Dorsolateral prefrontal cortex (tissue), 120 donors: ENCODE measurements at regions of chr5 and their contacts with region 1.

Region 1: GRCh38 chr5:141557681-141558136 is 61.1 kb downstream of the DIAPH1 start:
- DNase-seq: peak; percentile 82 to 96 (median 88)
- H3K4me3 ChIP-seq: peak overlapping the region; percentile 8 to 74 (median 53)
- H3K27ac ChIP-seq: peak overlapping the region; percentile 38 to 98 (median 93)
- H3K27me3 ChIP-seq: no peaks in the 10 kb centered on the region
- CTCF ChIP-seq: peak; percentile 88 to 100 (median 96)

Region 2: GRCh38 chr5:141349917-141350619 is 207.6 kb before region 1 on chr5 and contains the start of gene PCDHGB1:
- intact Hi-C with region 1: loop called in 1 of 2 experiments (anchors 10 kb)
- DNase-seq: no peak
- H3K4me3 ChIP-seq: peak within 1 kb of the TSS in 46 of 59 donors; percentile 0 to 55 (median 28)
- H3K27ac ChIP-seq: no peak within 1 kb of the TSS
- H3K27me3 ChIP-seq: peaks cover 0 to 46% (median 4%) of the 10 kb centered on the region in 45 donors
- CTCF ChIP-seq: peak in 47 of 56 donors; percentile 11 to 61 (median 34)
- total RNA-seq, gene PCDHGB1: 5.3 to 22.6 (median 11.4) TPM

Region 3: DNA sequence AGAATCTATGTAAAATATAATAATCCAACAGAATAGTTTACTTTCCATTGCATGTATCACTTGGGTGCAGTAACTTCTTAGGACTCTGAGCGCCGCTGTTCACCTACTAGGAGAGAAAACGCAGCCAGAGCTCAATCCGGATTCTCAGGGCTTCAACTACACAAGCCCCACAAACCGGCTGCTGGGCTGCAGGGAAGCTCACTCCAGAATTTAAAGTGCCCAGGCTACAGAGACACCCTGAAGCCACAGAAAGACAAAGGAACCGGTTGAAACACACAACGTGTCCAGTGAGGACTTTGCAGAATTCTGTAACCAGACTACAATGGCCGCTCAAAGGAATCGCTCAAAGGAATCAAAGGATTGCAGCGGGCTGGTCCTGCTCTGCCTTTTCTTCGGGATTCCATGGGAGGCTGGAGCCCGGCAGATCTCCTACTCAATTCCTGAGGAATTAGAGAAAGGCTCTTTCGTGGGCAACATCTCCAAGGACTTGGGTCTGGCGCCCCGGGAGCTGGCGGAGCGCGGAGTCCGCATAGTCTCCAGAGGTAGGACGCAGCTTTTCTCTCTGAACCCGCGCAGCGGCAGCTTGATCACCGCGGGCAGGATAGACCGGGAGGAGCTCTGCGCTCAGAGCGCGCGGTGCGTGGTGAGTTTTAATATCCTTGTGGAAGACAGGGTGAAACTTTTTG is 144.7 kb before region 1 on chr5 and contains the start of gene PCDHGA10:
- intact Hi-C with region 1: loop called in 1 of 2 experiments (anchors 5 kb)
- DNase-seq: peak in 1 of 10 donors; percentile 37
- H3K4me3 ChIP-seq: peak within 1 kb of the TSS in 47 of 59 donors; percentile 1 to 55 (median 32)
- H3K27ac ChIP-seq: peak within 1 kb of the TSS in 2 of 59 donors; percentile 22 to 34
- H3K27me3 ChIP-seq: no peaks in the 10 kb centered on the region
- CTCF ChIP-seq: peak in 46 of 56 donors; percentile 11 to 55 (median 30)
- total RNA-seq, gene PCDHGA10: 5.8 to 20.1 (median 10.8) TPM

Region 4: DNA sequence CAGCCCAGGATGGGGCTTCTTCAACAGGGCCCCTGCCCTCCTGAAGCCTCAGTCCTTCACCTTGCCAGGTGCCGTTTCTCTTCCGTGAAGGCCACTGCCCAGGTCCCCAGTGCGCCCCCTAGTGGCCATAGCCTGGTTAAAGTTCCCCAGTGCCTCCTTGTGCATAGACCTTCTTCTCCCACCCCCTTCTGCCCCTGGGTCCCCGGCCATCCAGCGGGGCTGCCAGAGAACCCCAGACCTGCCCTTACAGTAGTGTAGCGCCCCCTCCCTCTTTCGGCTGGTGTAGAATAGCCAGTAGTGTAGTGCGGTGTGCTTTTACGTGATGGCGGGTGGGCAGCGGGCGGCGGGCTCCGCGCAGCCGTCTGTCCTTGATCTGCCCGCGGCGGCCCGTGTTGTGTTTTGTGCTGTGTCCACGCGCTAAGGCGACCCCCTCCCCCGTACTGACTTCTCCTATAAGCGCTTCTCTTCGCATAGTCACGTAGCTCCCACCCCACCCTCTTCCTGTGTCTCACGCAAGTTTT is 45.3 kb before region 1 on chr5:
- intact Hi-C with region 1: loop called in 1 of 2 experiments (anchors 2 kb)
- DNase-seq: peak in 9 of 10 donors; percentile 71 to 88 (median 79)
- H3K4me3 ChIP-seq: peak overlapping the region; percentile 23 to 73 (median 60)
- H3K27ac ChIP-seq: peak overlapping the region in 58 of 59 donors; percentile 58 to 99 (median 93)
- H3K27me3 ChIP-seq: peaks cover 0 to 23% (median 0%) of the 10 kb centered on the region in 45 donors
- CTCF ChIP-seq: peak; percentile 43 to 93 (median 82)

Region 5: DNA sequence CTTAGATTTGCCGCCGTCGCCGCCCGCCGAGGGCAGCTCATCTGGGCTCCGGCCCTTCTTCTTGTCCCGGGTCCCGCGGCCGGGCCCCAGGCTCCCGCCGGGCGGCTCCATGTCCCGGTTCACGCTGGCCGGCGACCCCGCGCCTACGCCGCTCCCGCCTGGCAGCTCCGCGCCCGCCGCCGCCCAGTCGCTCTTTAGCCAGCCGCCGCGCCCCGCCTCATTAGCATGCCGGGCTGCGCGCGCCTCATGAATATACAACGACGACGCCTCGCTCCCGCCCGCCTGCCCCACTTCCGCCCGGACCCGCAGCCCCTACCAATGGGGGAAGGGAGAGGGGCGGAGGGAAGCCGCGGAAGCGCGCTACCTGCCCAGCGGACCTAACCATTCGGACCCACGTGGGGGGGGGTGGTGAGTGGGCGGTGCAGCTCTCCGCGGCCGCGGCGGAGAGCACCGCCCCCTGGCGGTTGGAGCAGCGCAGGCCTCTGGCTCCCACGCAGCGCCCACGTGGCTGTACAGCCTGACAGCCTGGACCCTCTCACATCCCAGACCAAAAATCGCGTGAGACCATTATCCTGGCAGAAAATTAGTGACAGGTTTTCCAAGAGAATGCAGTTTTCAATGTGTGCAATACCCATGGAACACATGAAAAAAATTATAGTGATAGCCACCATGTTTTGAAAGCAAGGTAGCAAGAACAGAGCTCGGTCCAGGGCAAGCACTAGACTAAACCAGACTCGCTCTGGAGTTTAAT is 61.3 kb after region 1 on chr5 and contains the start of gene DIAPH1:
- intact Hi-C with region 1: no loop called
- DNase-seq: peak; percentile 76 to 95 (median 88)
- H3K4me3 ChIP-seq: peak within 1 kb of the TSS; percentile 57 to 96 (median 84)
- H3K27ac ChIP-seq: peak within 1 kb of the TSS in 57 of 59 donors; percentile 7 to 93 (median 78)
- H3K27me3 ChIP-seq: no peaks in the 10 kb centered on the region
- CTCF ChIP-seq: peak; percentile 93 to 100 (median 98)
- total RNA-seq, gene DIAPH1: 19.5 to 72.5 (median 48.1) TPM